Activated CD4-positive, alpha-beta memory T cell treated with anti-CD3 and anti-CD28 coated beads for 36 hours (primary cell): ENCODE measurements at regions of chr22 and their contacts with region 1.

Region 1: GRCh38 chr22:21641789-21642583 is at the start of gene SDF2L1:
- DNase-seq: peak; percentile 99
- H3K4me3 Mint-ChIP-seq: peak within 1 kb of the TSS; percentile 87
- H3K27ac Mint-ChIP-seq: peak within 1 kb of the TSS; percentile 69
- H3K4me1 Mint-ChIP-seq: peaks cover 29% of the 10 kb centered on the region
- H3K27me3 Mint-ChIP-seq: peaks cover 3% of the 10 kb centered on the region
- total RNA-seq, gene SDF2L1: 38.2 to 41.8 TPM

Region 2: GRCh38 chr22:20916983-20917810 is 724.8 kb before region 1 on chr22 and contains the start of gene CRKL:
- CTCF ChIA-PET with region 1: no interaction called
- POLR2A ChIA-PET with region 1: no interaction called
- intact Hi-C with region 1: no loop called
- DNase-seq: peak; percentile 98
- H3K4me3 Mint-ChIP-seq: peak within 1 kb of the TSS; percentile 99
- H3K27ac Mint-ChIP-seq: peak within 1 kb of the TSS; percentile 88
- H3K4me1 Mint-ChIP-seq: peaks cover 28% of the 10 kb centered on the region
- H3K27me3 Mint-ChIP-seq: no peaks in the 10 kb centered on the region
- total RNA-seq, gene CRKL: 65.1 to 65.7 TPM

Region 3: GRCh38 chr22:21567456-21568346 is 74.3 kb before region 1 on chr22 and contains the start of gene UBE2L3:
- CTCF ChIA-PET with region 1: interaction called, 4 read pairs
- POLR2A ChIA-PET with region 1: no interaction called
- intact Hi-C with region 1: loop called (anchors 1 kb)
- DNase-seq: peak; percentile 90
- H3K4me3 Mint-ChIP-seq: peak within 1 kb of the TSS; percentile 94
- H3K27ac Mint-ChIP-seq: peak within 1 kb of the TSS; percentile 94
- H3K4me1 Mint-ChIP-seq: peaks cover 43% of the 10 kb centered on the region
- H3K27me3 Mint-ChIP-seq: no peaks in the 10 kb centered on the region
- total RNA-seq, gene UBE2L3: 52.4 to 53.1 TPM

Region 4: DNA sequence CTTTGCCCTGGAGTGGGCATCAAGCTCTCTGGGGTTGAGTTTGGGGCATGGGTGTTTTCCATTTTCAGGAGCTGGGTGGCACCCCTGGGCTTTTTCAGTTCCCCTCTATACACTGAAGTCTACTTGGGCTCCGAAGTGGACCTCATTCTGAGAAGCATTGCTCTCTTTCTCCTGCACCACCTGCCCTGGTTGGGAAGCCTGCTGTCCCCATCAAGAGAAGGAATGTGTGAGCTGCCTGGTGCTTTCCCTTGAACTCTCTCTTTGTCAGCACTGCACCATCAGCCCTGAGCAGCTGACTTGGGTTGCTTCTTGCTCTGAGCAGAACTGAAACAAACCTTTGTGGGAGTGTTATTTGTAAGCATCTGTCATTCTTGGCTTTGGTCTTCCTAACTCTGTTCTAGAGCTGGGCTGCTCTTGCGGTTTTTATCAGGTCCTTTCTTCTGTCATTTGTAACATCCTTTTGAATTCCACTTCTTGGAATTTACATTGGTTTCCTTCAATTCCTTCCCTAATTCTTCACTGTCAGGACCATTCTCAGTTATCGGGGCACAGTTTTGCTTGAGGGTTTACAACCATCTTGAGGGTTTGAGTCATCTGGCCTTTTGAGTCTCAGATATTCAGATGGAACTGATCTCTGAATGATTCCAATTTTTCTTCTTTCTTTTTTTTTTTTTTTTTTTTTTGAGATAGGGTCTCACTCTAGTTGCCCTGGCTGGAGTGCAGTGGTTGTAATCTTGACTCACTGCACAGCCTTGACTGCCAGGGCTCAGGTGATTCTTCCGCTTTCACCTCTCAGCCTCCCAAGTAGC is 54.0 kb before region 1 on chr22:
- CTCF ChIA-PET with region 1: interaction called, 12 read pairs
- POLR2A ChIA-PET with region 1: interaction called, 5 read pairs
- intact Hi-C with region 1: no loop called
- DNase-seq: peak; percentile 80
- H3K4me3 Mint-ChIP-seq: no peak overlapping the region
- H3K27ac Mint-ChIP-seq: peak overlapping the region; percentile 74
- H3K4me1 Mint-ChIP-seq: peaks cover 57% of the 10 kb centered on the region
- H3K27me3 Mint-ChIP-seq: no peaks in the 10 kb centered on the region

Region 5: DNA sequence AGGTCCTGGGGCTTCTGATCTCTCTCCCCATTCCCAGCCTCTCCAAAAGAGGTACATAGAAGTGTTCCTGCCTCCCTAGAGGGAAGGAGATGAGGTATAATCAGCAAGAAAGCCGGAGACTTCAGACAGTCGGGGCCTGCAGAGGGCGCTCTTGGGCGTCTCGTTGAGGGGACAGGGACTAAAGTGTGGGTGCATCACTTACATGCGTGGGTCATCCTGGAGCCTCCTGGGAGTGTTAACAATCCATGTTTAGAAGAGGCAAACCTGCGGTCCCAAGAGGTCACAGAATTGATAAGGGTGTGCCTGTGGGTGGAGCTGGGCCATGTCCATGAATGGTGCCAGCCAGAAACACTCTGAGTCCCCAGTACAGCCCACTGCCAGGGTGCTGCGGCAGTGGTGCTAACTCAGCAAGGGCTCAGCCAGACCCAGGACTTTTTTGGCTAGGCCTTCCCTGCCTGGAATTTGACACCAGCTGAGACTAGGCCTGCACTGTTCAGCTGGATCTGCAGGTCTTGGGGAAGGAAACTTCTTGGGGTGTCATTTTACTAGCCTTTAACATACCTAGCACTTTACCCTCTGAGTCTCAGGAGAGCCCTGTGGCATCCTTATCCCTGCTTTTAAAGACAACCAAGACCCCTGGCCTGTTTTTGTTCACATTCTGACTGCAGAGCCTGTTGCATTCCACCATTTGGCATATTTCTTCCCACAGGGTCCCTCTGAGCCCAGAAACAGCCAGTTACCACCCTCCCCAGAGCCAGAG is 17.7 kb before region 1 on chr22:
- CTCF ChIA-PET with region 1: interaction called, 151 read pairs
- POLR2A ChIA-PET with region 1: interaction called, 46 read pairs
- intact Hi-C with region 1: no loop called
- DNase-seq: peak; percentile 60
- H3K4me3 Mint-ChIP-seq: no peak overlapping the region
- H3K27ac Mint-ChIP-seq: peak overlapping the region; percentile 31
- H3K4me1 Mint-ChIP-seq: peaks cover 27% of the 10 kb centered on the region
- H3K27me3 Mint-ChIP-seq: no peaks in the 10 kb centered on the region

Region 6: DNA sequence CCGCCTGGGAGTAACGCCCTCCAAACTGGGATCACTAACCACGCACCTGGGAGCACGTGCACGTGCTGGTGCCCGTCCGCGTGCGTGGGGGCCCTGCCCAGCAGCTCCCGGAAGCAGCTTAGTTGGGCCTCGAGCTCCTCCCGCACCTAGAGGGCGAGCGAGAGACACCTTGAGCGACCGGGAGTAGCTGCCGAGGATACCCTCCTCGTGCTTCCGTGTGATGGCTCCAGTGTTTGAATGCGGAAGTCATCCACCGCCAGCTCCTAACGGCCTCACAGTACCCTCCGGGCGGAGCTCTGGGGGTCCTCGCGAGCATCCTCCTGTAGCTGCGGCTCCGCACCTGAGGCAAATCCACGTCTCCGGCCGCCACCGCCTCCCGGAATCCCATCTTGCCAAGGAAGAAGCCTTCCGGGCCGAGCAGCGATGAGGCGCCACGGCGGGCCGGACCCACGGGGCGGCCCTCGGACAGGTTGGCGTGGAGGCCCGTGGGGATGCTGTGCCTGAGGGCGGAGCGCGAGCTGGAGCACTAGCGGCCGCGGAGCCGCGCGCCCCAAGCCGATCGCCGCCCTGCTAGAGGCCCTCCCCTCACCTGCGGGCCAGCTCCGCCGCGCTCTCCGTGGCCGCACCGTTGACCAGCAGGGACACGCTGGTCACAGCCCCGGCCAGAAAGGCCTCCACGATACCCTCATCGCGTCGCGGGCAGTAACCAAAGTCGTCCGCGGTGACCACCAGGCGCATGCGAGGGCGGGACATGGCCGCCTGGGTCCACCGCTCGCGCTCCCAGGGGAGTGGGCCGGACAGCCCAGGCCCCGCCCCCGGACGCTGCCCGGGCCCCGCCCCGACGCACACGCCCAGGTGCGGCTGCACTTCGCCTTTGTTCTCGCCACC is 12.5 kb before region 1 on chr22 and contains the start of gene YDJC:
- CTCF ChIA-PET with region 1: interaction called, 151 read pairs
- POLR2A ChIA-PET with region 1: interaction called, 46 read pairs
- intact Hi-C with region 1: loop called (anchors 1 kb)
- DNase-seq: peak; percentile 96
- H3K4me3 Mint-ChIP-seq: peak within 1 kb of the TSS; percentile 89
- H3K27ac Mint-ChIP-seq: peak within 1 kb of the TSS; percentile 92
- H3K4me1 Mint-ChIP-seq: peaks cover 38% of the 10 kb centered on the region
- H3K27me3 Mint-ChIP-seq: no peaks in the 10 kb centered on the region
- total RNA-seq, gene YDJC: 45.3 to 47.1 TPM

Region 7: DNA sequence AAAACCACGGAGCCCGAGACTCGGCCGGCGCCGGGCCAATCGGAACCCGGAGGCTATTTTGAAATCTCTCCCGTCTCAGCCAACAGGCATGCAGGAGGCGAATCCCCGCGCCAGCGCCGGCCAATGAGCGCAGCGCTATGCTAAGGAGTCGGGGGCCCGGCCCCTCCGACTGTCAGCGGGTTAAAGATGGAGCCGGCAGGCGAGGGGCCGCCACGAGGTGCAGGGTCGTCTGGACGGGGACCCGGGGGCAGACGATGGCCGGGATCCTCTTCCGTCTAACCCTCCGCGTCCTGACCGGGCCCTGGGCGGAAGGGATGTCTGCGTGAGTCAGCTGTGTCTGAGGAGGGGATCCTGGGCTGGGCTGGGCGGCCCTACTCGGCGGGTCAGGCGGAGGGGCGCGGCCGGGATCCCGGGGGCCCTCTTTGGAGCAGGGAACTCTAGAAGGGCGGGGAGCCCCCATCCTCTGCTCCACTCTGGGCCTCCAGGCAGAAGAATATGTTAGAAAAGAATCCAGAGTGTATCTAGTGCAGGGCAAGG is 10.1 kb after region 1 on chr22:
- CTCF ChIA-PET with region 1: interaction called, 30 read pairs
- POLR2A ChIA-PET with region 1: interaction called, 29 read pairs
- intact Hi-C with region 1: loop called (anchors 1 kb)
- DNase-seq: peak; percentile 93
- H3K4me3 Mint-ChIP-seq: peak overlapping the region; percentile 85
- H3K27ac Mint-ChIP-seq: peak overlapping the region; percentile 38
- H3K4me1 Mint-ChIP-seq: peaks cover 20% of the 10 kb centered on the region
- H3K27me3 Mint-ChIP-seq: no peaks in the 10 kb centered on the region

Region 8: DNA sequence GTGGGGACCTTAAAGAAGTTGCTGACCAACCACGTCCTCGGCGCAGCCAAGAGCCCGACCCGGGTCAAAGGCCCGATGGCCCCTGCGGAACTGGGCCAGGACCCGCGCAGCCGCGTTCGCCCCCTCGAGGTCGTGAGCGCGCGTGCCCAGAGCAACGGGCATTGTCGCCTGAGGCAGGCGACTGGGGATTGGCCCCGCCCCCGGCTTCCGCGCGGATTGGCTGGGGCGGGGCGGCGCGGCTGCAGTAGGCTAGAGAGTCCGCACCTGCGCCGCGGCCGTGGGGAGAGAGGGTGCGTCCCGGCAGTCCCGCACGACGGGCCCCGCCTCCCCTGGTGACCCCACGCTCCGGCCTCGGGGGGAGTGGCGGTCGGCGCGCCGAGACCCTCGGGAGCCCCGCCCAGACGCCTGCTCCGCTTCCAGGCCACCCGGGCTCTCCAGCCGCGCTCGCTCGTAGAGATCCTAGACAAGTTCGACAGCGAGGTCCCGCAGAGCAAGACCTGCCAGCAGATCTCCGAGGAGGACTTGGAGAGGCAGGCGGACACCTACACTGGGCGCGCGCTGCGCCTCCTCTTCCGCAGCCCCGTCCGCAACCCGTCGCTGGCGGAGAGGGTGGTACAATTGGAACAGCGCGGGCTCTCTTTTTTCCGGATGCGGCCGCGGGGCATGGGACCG is 15.5 kb after region 1 on chr22:
- CTCF ChIA-PET with region 1: interaction called, 30 read pairs
- POLR2A ChIA-PET with region 1: interaction called, 29 read pairs
- intact Hi-C with region 1: no loop called
- DNase-seq: peak; percentile 84
- H3K4me3 Mint-ChIP-seq: peak overlapping the region; percentile 84
- H3K27ac Mint-ChIP-seq: no peak overlapping the region
- H3K4me1 Mint-ChIP-seq: peaks cover 15% of the 10 kb centered on the region
- H3K27me3 Mint-ChIP-seq: no peaks in the 10 kb centered on the region